Activated naive CD4-positive, alpha-beta T cell treated with anti-CD3 and anti-CD28 coated beads for 36 hours (primary cell): ENCODE measurements at regions of chr1 and their contacts with region 1.

Region 1: GRCh38 chr1:24481101-24481500 is 21.5 kb upstream of the RCAN3 start:
- DNase-seq: peak; percentile 89
- H3K4me3 Mint-ChIP-seq: peak overlapping the region; percentile 67
- H3K27ac Mint-ChIP-seq: peak overlapping the region; percentile 99
- H3K4me1 Mint-ChIP-seq: peaks cover 70% of the 10 kb centered on the region
- H3K27me3 Mint-ChIP-seq: no peaks in the 10 kb centered on the region

Region 2: GRCh38 chr1:23959041-23959460 is 522.0 kb before region 1 on chr1:
- CTCF ChIA-PET with region 1: no interaction called
- intact Hi-C with region 1: loop called (anchors 5 kb)
- DNase-seq: peak; percentile 98
- H3K4me3 Mint-ChIP-seq: peak overlapping the region; percentile 99
- H3K27ac Mint-ChIP-seq: peak overlapping the region; percentile 100
- H3K4me1 Mint-ChIP-seq: peaks cover 59% of the 10 kb centered on the region
- H3K27me3 Mint-ChIP-seq: no peaks in the 10 kb centered on the region

Region 3: GRCh38 chr1:24415334-24415909 is 65.7 kb before region 1 on chr1 and contains the start of gene NIPAL3:
- CTCF ChIA-PET with region 1: interaction called, 7 read pairs
- intact Hi-C with region 1: loop called (anchors 1 kb)
- DNase-seq: peak; percentile 100
- H3K4me3 Mint-ChIP-seq: peak within 1 kb of the TSS; percentile 94
- H3K27ac Mint-ChIP-seq: peak within 1 kb of the TSS; percentile 94
- H3K4me1 Mint-ChIP-seq: peaks cover 56% of the 10 kb centered on the region
- H3K27me3 Mint-ChIP-seq: no peaks in the 10 kb centered on the region
- total RNA-seq, gene NIPAL3: 58.1 to 59.2 TPM

Region 4: DNA sequence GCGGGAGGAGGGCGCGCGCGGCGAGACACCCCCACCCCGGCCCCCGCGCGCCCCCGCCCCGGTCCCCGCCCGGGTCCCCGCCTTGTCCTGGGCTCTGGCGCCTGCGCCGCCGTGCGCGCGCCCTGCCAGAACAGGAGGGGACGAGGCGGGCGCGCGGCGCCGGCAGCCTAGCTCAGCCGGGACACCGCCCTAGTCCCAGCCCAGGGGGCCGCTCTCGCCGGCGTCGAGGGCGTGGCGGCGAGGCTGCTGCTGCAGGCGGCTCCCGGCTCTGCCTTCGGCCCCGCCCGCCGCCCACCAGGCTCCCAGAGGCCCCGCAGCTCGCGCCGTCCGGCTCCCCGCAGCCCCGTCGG is 21.6 kb after region 1 on chr1 and contains the start of gene RCAN3:
- CTCF ChIA-PET with region 1: interaction called, 9 read pairs
- intact Hi-C with region 1: loop called (anchors 1 kb)
- DNase-seq: peak; percentile 87
- H3K4me3 Mint-ChIP-seq: peak within 1 kb of the TSS; percentile 100
- H3K27ac Mint-ChIP-seq: peak within 1 kb of the TSS; percentile 93
- H3K4me1 Mint-ChIP-seq: peaks cover 49% of the 10 kb centered on the region
- H3K27me3 Mint-ChIP-seq: no peaks in the 10 kb centered on the region
- total RNA-seq, gene RCAN3: 70.8 to 71.9 TPM

Region 5: DNA sequence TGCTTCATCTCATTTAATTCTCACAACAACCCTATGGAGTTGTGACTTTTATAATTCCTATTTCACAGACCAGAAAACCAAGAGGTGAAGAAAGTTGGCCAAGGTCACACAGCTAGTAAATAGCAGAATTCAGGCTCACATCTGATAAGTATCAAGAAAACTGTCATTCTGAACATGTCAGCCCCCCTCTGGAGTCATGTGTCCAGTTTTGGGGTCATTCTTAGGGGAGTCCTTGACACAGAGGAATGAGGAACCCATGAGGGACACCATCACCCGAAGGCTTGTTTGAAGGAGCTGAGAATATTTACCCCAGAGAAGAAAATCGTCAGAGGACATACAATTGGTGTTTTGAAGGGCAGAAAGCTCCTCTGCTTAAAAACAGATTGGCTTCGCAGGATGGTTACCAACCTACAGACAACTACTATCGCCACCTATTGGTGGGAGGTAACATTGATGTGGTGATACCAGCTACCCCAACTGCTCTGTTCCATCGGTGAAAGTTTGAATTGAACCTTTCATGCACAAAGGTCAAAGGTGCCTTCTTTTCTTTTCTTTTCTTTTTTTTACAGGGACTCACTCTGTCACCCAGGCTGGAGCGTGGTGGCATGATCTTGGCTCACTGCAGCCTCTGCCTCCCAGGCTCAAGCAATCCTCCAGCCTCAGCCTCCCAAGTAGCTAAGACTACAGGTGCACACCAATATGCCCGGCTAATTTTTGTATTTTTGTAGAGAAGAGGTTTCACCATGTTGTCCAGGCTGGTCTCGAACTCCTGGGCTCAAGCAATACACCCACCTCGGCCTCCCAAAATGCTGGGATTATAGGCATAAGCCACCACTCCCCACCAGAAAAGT is 106.1 kb after region 1 on chr1:
- CTCF ChIA-PET with region 1: interaction called, 6 read pairs
- intact Hi-C with region 1: loop called (anchors 2 kb)
- DNase-seq: peak; percentile 71
- H3K4me3 Mint-ChIP-seq: peak overlapping the region; percentile 24
- H3K27ac Mint-ChIP-seq: peak overlapping the region; percentile 72
- H3K4me1 Mint-ChIP-seq: peaks cover 5% of the 10 kb centered on the region
- H3K27me3 Mint-ChIP-seq: no peaks in the 10 kb centered on the region

Region 6: DNA sequence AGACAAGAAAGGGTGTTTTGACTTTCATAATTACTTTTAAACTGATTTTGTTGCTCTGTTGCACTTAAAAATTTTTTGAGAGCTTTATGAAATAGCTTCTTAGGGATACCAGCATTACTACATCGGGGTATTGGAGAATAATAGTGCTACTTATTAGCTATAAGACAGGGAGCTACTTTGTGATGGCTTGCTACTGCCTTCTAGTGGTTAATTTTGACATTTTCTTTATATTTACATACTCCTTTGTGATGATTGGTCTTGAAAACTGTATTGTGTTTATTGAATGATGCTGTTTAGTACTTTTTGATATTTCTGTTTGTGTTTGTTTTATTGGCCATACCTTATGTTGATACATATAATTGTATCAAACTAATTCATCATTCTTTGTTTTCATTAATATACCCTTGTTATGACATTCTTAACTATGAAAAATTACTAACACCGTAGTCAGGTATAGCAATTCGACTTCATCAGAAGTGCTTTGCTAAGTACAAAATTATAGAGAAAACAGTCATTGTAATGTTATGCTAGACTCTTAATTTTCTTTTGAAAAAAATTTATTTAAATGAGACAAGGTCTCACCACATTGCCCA is 349.7 kb after region 1 on chr1:
- CTCF ChIA-PET with region 1: no interaction called
- intact Hi-C with region 1: no loop called
- DNase-seq: no peak
- H3K4me3 Mint-ChIP-seq: no peak overlapping the region
- H3K27ac Mint-ChIP-seq: no peak overlapping the region
- H3K4me1 Mint-ChIP-seq: no peaks in the 10 kb centered on the region
- H3K27me3 Mint-ChIP-seq: no peaks in the 10 kb centered on the region

Region 7: DNA sequence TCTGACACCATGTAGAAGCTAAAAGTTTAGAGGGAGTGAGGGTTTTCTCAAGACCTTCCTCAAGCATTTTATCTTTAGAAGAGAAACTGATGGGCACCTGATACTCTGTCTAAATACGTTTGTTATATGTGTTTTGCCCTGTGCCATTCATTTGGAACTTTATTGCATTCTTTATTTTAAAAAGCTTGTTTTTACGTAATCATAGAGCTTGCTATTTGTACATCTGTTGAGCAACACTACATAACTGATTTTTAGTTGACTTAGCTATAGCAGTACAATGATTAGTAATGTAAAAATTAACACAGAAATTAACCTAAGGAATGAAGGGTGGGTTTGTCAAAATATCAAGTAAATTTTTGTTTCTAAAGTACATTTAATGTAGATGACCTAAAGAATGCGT is 360.5 kb after region 1 on chr1:
- CTCF ChIA-PET with region 1: no interaction called
- intact Hi-C with region 1: no loop called
- DNase-seq: no peak
- H3K4me3 Mint-ChIP-seq: no peak overlapping the region
- H3K27ac Mint-ChIP-seq: no peak overlapping the region
- H3K4me1 Mint-ChIP-seq: no peaks in the 10 kb centered on the region
- H3K27me3 Mint-ChIP-seq: peaks cover 3% of the 10 kb centered on the region

Region 8: DNA sequence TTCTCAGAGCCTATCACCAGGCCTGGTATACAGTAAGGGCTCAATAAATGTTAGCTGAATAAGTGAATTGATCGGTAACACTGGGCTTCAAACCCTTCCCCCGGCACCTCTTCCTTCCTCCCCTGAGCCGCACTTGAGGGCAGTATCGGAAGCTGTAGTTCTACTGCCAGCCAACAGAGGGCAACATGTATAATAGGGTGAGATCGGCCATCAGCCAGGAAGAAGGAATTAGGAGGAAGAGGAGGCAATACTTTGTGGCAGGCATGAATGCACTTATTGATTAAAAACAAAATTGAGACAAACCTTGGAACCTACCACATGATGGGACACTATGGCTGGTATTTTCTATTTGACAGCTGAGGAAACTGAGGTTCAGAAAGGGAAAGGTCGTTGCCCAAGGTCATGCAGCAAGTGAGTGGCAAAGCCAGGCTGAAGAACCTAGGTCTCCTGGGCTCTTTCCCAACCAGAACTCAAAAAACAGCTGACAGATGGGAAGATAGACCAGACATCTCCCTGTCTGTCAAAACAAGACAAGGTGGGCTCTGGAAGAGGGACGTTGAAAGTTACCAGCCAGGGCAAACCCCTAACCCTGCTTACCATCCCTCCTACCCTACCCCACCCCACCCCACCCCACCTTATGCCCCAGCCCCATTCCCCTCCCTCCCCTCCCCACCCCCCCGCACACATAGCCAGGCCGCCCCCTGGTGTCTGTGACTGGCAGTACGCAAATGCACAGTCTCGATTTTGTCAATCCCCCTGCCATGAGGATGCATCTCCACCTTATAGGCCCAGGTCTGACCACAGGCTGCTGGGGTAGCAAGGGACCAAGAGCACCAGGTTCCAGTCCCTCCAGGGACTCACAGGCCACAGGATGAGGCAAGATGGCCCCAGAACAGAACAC is 556.3 kb after region 1 on chr1:
- CTCF ChIA-PET with region 1: no interaction called
- intact Hi-C with region 1: loop called (anchors 10 kb)
- DNase-seq: peak; percentile 82
- H3K4me3 Mint-ChIP-seq: no peak overlapping the region
- H3K27ac Mint-ChIP-seq: no peak overlapping the region
- H3K4me1 Mint-ChIP-seq: peaks cover 28% of the 10 kb centered on the region
- H3K27me3 Mint-ChIP-seq: no peaks in the 10 kb centered on the region